ENCODE measurements at regions of chr4 and their contacts with region 1.

Region 1: GRCh38 chr4:83284193-83285054 is at the start of gene COQ2:
- DNase-seq: peak; percentile 96
- ATAC-seq: peak; percentile 85
- H3K4me3 ChIP-seq: peak within 1 kb of the TSS; percentile 60 to 98 (median 77)
- H3K4me3 Mint-ChIP-seq: peak within 1 kb of the TSS; percentile 99
- H3K27ac ChIP-seq: peak within 1 kb of the TSS; percentile 76 to 95
- H3K27ac Mint-ChIP-seq: peak within 1 kb of the TSS; percentile 99
- H3K4me1 ChIP-seq: peaks cover 18 to 19% of the 10 kb centered on the region in 2 donors
- H3K4me1 Mint-ChIP-seq: peaks cover 38% of the 10 kb centered on the region
- H3K27me3 ChIP-seq: no peaks in the 10 kb centered on the region
- H3K27me3 Mint-ChIP-seq: no peaks in the 10 kb centered on the region
- CTCF ChIP-seq: peak; percentile 34
- total RNA-seq, gene COQ2: 27.9 and 29.4 TPM in 2 replicates

Region 2: GRCh38 chr4:82900331-82901128 is 383.9 kb before region 1 on chr4 and contains the start of gene THAP9:
- CTCF ChIA-PET with region 1: interaction called, 5 read pairs
- POLR2A ChIA-PET with region 1: no interaction called
- intact Hi-C with region 1: loop called (anchors 1 kb)
- DNase-seq: peak; percentile 99
- ATAC-seq: peak; percentile 90
- H3K4me3 ChIP-seq: peak within 1 kb of the TSS; percentile 73 to 92 (median 90)
- H3K4me3 Mint-ChIP-seq: no peak within 1 kb of the TSS
- H3K27ac ChIP-seq: peak within 1 kb of the TSS; percentile 97 to 98
- H3K27ac Mint-ChIP-seq: no peak within 1 kb of the TSS
- H3K4me1 ChIP-seq: peaks cover 22 to 27% of the 10 kb centered on the region in 2 donors
- H3K4me1 Mint-ChIP-seq: peaks cover 11% of the 10 kb centered on the region
- H3K27me3 ChIP-seq: no peaks in the 10 kb centered on the region
- H3K27me3 Mint-ChIP-seq: no peaks in the 10 kb centered on the region
- CTCF ChIP-seq: no peak
- total RNA-seq, gene THAP9: 6.8 and 7.8 TPM in 2 replicates

Region 3: DNA sequence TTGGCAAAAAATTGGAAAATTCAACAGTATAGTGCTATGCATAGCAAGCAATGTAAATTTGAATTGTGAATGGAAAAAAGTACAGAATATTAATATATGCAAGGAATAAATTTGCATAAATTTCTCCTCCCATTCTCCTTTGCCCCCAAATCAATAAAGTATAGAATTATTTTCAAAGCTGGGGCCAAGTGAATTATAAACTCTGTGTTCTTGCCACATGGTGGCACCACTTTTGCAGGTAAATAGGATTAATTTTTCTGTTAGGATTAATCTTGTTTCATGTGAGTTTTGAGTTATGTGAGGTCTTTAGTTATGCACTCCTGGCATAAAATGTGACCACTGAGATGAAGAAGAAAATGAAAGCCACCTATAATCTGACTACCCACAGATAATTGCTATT is 229.5 kb before region 1 on chr4:
- CTCF ChIA-PET with region 1: interaction called, 61 read pairs
- POLR2A ChIA-PET with region 1: no interaction called
- intact Hi-C with region 1: loop called (anchors 1 kb)
- DNase-seq: peak; percentile 52
- ATAC-seq: no peak
- H3K4me3 ChIP-seq: no peak overlapping the region
- H3K4me3 Mint-ChIP-seq: no peak overlapping the region
- H3K27ac ChIP-seq: no peak overlapping the region
- H3K27ac Mint-ChIP-seq: no peak overlapping the region
- H3K4me1 ChIP-seq: no peaks in the 10 kb centered on the region
- H3K4me1 Mint-ChIP-seq: peaks cover 2% of the 10 kb centered on the region
- H3K27me3 ChIP-seq: no peaks in the 10 kb centered on the region
- H3K27me3 Mint-ChIP-seq: no peaks in the 10 kb centered on the region
- CTCF ChIP-seq: peak; percentile 59

Region 4: DNA sequence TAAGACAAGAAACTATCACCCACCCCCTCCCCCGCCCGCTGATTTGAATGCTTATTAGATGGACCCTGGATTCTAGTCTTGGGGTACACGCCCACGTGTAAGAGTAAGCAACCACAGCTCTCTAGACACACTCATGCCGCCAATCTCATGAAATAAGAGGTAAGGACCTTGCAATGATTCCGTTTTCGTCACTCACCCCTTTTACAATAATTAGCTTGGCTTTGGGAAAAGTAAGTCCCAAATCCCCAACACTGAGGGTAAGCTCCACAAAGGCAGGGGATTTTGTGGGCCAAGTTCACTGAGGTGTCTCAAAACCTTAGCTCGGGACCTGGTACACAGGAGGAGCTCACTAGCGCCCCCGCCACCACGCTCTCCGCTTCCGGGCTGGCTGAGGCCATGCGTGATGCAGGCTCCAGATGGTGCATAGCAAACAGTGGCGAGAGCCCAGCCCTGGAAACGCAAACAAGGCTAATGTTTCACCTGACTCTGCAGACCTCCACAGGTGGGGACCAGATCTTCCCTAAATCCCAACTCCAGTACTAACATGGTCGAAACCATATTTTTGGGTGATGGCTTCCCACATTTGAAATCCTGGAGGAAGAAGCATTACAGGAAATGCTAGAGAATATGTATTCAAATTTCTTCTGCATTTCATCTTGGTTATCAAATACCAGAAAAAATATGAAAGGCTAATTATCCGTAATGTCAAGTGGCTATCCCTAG is 174.0 kb before region 1 on chr4:
- CTCF ChIA-PET with region 1: interaction called, 57 read pairs
- POLR2A ChIA-PET with region 1: interaction called, 6 read pairs
- intact Hi-C with region 1: no loop called
- DNase-seq: peak; percentile 94
- ATAC-seq: peak; percentile 75
- H3K4me3 ChIP-seq: peak overlapping the region; percentile 64 to 100 (median 75)
- H3K4me3 Mint-ChIP-seq: peak overlapping the region; percentile 97
- H3K27ac ChIP-seq: peak overlapping the region; percentile 91
- H3K27ac Mint-ChIP-seq: peak overlapping the region; percentile 99
- H3K4me1 ChIP-seq: peaks cover 44 to 48% of the 10 kb centered on the region in 2 donors
- H3K4me1 Mint-ChIP-seq: peaks cover 60% of the 10 kb centered on the region
- H3K27me3 ChIP-seq: no peaks in the 10 kb centered on the region
- H3K27me3 Mint-ChIP-seq: no peaks in the 10 kb centered on the region
- CTCF ChIP-seq: peak; percentile 75

Region 5: DNA sequence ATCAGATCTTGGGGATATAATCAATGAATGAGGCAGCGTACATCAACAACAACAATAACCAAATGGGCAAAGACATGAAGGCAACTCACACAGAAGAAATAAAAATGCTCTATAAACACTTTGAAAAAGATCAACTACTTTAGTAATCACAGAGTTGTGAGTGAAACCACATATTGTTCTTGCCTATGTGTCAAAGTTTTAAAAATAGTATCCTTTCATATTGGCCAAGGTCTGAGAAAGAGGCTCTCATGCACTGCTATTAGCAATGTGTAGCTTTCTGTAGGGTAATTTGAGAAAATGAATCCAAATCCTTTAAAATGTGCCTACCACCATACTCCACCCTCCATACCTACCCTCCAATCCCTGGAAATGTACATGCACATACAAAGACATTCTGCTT is 24.8 kb before region 1 on chr4:
- CTCF ChIA-PET with region 1: interaction called, 96 read pairs
- POLR2A ChIA-PET with region 1: interaction called, 7 read pairs
- intact Hi-C with region 1: loop called (anchors 1 kb)
- DNase-seq: no peak
- ATAC-seq: no peak
- H3K4me3 ChIP-seq: no peak overlapping the region
- H3K4me3 Mint-ChIP-seq: no peak overlapping the region
- H3K27ac ChIP-seq: peak overlapping the region in 1 of 2 donors; percentile 5
- H3K27ac Mint-ChIP-seq: peak overlapping the region; percentile 21
- H3K4me1 ChIP-seq: peaks cover 44 to 53% of the 10 kb centered on the region in 2 donors
- H3K4me1 Mint-ChIP-seq: peaks cover 42% of the 10 kb centered on the region
- H3K27me3 ChIP-seq: no peaks in the 10 kb centered on the region
- H3K27me3 Mint-ChIP-seq: no peaks in the 10 kb centered on the region
- CTCF ChIP-seq: no peak

Region 6: GRCh38 chr4:83455281-83456129 is 171.1 kb after region 1 on chr4 and contains the starts of genes HELQ and MRPS18C:
- CTCF ChIA-PET with region 1: interaction called, 4 read pairs
- POLR2A ChIA-PET with region 1: interaction called, 5 read pairs
- intact Hi-C with region 1: loop called (anchors 1 kb)
- DNase-seq: peak; percentile 99
- ATAC-seq: peak; percentile 91
- H3K4me3 ChIP-seq: peak within 1 kb of the TSS; percentile 83 to 96 (median 94)
- H3K4me3 Mint-ChIP-seq: peak within 1 kb of the TSS; percentile 100
- H3K27ac ChIP-seq: peak within 1 kb of the TSS; percentile 95 to 100
- H3K27ac Mint-ChIP-seq: peak within 1 kb of the TSS; percentile 100
- H3K4me1 ChIP-seq: peaks cover 18 to 22% of the 10 kb centered on the region in 2 donors
- H3K4me1 Mint-ChIP-seq: peaks cover 60% of the 10 kb centered on the region
- H3K27me3 ChIP-seq: no peaks in the 10 kb centered on the region
- H3K27me3 Mint-ChIP-seq: no peaks in the 10 kb centered on the region
- CTCF ChIP-seq: peak; percentile 19
- total RNA-seq, gene HELQ: 42.4 and 50.8 TPM in 2 replicates
- total RNA-seq, gene MRPS18C: 44.0 and 45.0 TPM in 2 replicates

Measured in B cell (primary cell).